ENCODE measurements at regions of chr5 and their contacts with region 1.

Region 1: GRCh38 chr5:66646621-66647020 is 50.4 kb downstream of the MAST4 start:
- DNase-seq: no peak
- H3K4me3 ChIP-seq: no peak overlapping the region
- CTCF ChIP-seq: no peak

Region 2: DNA sequence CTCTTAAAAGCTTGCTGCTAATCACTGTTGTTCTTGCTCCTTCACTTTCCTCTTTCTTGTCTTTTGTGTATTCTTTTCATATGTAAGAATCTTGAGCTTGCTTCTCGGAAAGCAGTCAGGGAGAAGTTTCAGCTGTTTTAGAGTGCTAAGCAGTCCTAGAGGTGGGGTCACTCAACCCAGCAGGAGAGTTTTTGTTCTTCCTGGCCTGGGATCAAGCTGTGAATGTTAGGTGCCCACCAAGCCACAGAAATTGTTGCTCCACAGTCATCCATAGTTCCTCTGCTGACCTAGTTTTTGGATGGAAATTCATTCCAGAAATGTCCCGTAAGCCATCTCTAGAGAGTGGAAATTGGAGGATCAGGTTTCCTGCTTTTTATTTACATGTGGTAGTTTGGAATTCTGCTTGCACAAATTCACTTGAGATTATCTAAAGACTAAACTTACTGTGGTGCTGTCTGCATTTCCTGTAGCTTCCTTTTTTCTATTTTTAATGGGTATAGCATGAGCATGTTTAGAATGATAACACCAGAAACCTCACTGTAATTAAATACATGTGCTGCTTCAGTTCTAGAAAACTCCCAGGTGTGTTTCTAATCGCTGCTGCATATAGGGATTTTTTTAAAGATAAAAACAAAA is 58.3 kb after region 1 on chr5:
- in situ Hi-C with region 1: loop called (anchors 5 kb)
- DNase-seq: peak; percentile 77
- H3K4me3 ChIP-seq: no peak overlapping the region
- CTCF ChIP-seq: no peak

Region 3: GRCh38 chr5:67350618-67351201 is 704.1 kb after region 1 on chr5:
- in situ Hi-C with region 1: no loop called
- DNase-seq: no peak
- H3K4me3 ChIP-seq: no peak overlapping the region
- CTCF ChIP-seq: no peak